A673 (cell line): ENCODE measurements at regions of chr6 and their contacts with region 1.

Region 1: DNA sequence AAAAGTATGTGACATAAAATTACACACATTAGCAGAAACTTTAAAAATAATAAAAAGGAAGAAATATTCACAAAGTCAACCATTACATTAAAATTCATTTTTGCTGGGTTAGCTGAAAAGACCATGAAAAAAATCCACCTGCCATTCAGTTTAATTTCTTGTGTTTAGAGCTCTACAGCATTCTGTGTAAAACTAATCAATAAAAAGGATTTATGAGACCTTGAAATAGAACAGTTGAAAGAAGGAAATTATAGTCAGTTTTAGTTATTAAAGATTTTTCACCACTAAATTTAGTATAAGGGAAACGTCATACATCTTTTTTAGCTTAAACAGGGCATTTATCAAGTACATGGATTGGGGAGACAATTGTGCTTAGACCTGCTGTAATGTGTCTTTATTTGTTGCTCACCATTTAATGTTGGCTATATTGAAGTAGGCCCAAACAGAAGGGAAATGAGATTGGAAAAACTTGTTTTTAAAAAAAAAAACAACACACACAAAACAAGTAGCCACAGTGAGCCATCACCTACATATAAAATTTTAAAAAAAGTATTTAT is 438.7 kb upstream of the POU3F2 start:
- DNase-seq: no peak
- H3K4me3 ChIP-seq: no peak overlapping the region
- H3K27ac ChIP-seq: no peak overlapping the region
- H3K4me1 ChIP-seq: no peaks in the 10 kb centered on the region
- H3K27me3 ChIP-seq: no peaks in the 10 kb centered on the region
- CTCF ChIP-seq: no peak

Region 2: GRCh38 chr6:97919631-97920030 is 476.1 kb before region 1 on chr6:
- CTCF ChIA-PET with region 1: no interaction called
- POLR2A ChIA-PET with region 1: no interaction called
- intact Hi-C with region 1: no loop called
- DNase-seq: peak; percentile 48
- H3K4me3 ChIP-seq: no peak overlapping the region
- H3K27ac ChIP-seq: no peak overlapping the region
- H3K4me1 ChIP-seq: peaks cover 16% of the 10 kb centered on the region
- H3K27me3 ChIP-seq: no peaks in the 10 kb centered on the region
- CTCF ChIP-seq: no peak

Region 3: DNA sequence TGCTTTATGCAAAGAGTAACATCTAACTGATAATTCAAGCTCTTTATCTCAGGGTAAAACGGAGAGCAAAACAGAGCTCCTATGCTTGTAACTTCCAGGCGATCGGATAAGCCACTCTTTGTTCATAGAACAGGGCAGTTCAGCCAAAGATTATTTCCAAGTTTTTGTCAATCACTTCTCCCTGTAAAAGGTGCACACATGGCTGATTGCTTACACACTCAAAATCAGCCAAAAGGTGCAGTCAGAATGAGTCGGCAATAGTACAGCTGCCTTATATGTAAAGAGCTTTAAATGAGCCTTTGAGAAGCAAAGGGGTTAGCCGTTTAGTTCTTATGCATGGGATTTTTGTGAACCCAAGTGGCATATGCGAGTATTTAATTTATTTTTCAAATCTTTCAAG is 10.9 kb before region 1 on chr6:
- CTCF ChIA-PET with region 1: no interaction called
- POLR2A ChIA-PET with region 1: no interaction called
- intact Hi-C with region 1: loop called (anchors 1 kb)
- DNase-seq: peak; percentile 6
- H3K4me3 ChIP-seq: no peak overlapping the region
- H3K27ac ChIP-seq: no peak overlapping the region
- H3K4me1 ChIP-seq: no peaks in the 10 kb centered on the region
- H3K27me3 ChIP-seq: no peaks in the 10 kb centered on the region
- CTCF ChIP-seq: no peak